Mammary epithelial cell (primary cell): ENCODE measurements at regions of chr5 and their contacts with region 1.

Region 1: GRCh38 chr5:122639864-122640263 is 135.0 kb upstream of the SNX2 start:
- DNase-seq: no peak
- H3K4me3 ChIP-seq: no peak overlapping the region
- H3K27ac ChIP-seq: no peak overlapping the region
- H3K4me1 ChIP-seq: no peaks in the 10 kb centered on the region
- H3K27me3 ChIP-seq: no peaks in the 10 kb centered on the region
- CTCF ChIP-seq: no peak

Region 2: GRCh38 chr5:123215933-123216702 is 576.3 kb after region 1 on chr5:
- CTCF ChIA-PET with region 1: no interaction called
- dilution Hi-C with region 1: no loop called
- in situ Hi-C with region 1: no loop called
- intact Hi-C with region 1: loop called (anchors 5 kb)
- DNase-seq: no peak
- H3K4me3 ChIP-seq: no peak overlapping the region
- H3K27ac ChIP-seq: no peak overlapping the region
- H3K4me1 ChIP-seq: no peaks in the 10 kb centered on the region
- H3K27me3 ChIP-seq: no peaks in the 10 kb centered on the region
- CTCF ChIP-seq: peak in 1 of 2 donors; percentile 38